ENCODE measurements at regions of chr7 and their contacts with region 1.

Region 1: DNA sequence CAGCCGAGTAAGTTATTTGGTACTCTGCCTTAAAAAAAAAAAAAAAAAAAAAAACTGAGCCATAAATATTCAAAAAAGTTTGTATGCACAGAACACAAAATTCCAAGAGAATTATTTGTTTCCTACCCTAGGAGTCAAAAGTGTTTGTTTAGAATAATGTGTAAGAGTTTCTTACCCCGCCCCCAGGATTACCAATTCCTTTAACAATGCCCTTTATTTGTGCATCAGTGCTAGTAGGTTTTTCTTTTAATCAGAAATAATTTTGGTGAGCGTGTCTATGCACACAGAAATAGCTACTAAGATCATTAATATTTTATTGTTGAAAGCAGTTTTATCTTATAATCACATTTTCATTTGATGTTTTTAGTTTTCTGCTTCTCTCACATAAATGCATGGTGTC is 374.6 kb downstream of the DPP6 start:
- DNase-seq: no peak

Region 2: DNA sequence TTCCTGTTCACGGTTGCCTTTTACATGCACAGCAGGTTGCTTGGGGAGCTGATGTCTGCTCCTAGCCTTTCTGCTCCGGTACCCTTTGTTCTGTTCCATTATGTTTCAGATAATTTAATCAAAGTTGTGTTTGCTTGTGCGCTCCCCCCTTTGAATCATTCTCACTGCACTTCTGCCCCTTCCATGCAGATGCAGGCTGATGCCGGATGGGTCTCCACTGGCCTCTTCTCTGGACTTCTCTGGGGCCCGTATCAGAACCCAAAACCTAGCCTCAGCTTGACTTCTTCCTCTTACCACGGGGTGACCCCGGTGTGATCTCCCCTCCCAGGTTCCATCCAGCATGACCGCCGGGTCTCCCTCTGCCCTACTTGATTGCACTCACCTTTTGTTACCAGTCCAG is 102.6 kb before region 1 on chr7:
- intact Hi-C with region 1: no loop called
- DNase-seq: peak in 1 of 10 donors; percentile 59

Region 3: GRCh38 chr7:154364170-154364569 is 62.6 kb before region 1 on chr7:
- intact Hi-C with region 1: no loop called
- DNase-seq: peak in 8 of 10 donors; percentile 28 to 90 (median 52)

Region 4: GRCh38 chr7:154484406-154484805 is 57.6 kb after region 1 on chr7:
- intact Hi-C with region 1: loop called (anchors 1 kb)
- DNase-seq: peak; percentile 71 to 98 (median 81)

Region 5: GRCh38 chr7:154578336-154578735 is 151.6 kb after region 1 on chr7:
- intact Hi-C with region 1: no loop called
- DNase-seq: no peak

Region 6: GRCh38 chr7:154794110-154794780 is 367.5 kb after region 1 on chr7:
- intact Hi-C with region 1: no loop called
- DNase-seq: peak in 2 of 10 donors; percentile 76 to 91